Activated B cell treated with CpG ODN at 0.5 μM for 24 hours (primary cell): ENCODE measurements at regions of chr7 and their contacts with region 1.

Region 1: DNA sequence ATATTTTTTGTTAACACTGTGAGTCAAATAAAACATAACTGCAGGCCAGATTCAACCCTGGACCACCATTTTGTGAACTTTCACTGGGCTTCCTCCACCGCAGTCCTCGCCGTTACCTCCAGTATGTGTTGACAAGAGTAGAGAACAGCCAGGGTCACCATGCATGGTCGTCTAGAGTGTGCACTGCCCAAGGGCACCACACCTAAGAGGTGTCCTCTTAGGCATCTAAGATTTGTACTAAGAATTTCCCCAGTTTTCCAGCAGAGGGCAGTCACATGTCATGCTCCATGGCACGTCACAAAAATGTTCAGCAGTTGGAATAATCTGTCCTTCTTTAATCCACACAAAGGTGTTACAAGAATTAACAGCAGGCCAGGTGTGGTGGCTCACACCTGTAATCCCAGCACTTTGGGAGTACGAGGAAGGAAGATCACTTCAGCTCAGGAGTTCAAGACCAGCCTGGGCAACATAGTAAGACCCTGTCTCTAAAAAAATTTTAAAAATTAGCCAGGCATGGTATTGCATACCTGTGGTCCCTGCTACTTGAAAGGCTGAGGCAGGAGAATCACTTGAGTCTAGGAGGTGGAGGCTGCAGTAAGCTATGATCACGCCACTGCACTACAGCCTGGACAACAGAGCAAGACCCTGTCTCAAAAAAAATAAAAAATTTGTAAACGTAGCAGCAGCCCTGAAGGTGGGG is 71.2 kb upstream of the FOXK1 start:
- DNase-seq: peak; percentile 26
- ATAC-seq: peak; percentile 77
- H3K4me3 Mint-ChIP-seq: no peak overlapping the region
- H3K27ac Mint-ChIP-seq: no peak overlapping the region
- H3K4me1 Mint-ChIP-seq: peaks cover 12% of the 10 kb centered on the region
- H3K27me3 Mint-ChIP-seq: peaks cover 10% of the 10 kb centered on the region
- CTCF ChIP-seq: no peak

Region 2: GRCh38 chr7:4006687-4007086 is 604.2 kb before region 1 on chr7:
- CTCF ChIA-PET with region 1: no interaction called
- POLR2A ChIA-PET with region 1: no interaction called
- intact Hi-C with region 1: no loop called
- DNase-seq: no peak
- ATAC-seq: no peak
- H3K4me3 Mint-ChIP-seq: no peak overlapping the region
- H3K27ac Mint-ChIP-seq: no peak overlapping the region
- H3K4me1 Mint-ChIP-seq: no peaks in the 10 kb centered on the region
- H3K27me3 Mint-ChIP-seq: peaks cover 1% of the 10 kb centered on the region
- CTCF ChIP-seq: no peak

Region 3: GRCh38 chr7:4434306-4434705 is 176.6 kb before region 1 on chr7:
- CTCF ChIA-PET with region 1: no interaction called
- POLR2A ChIA-PET with region 1: no interaction called
- intact Hi-C with region 1: no loop called
- DNase-seq: no peak
- ATAC-seq: no peak
- H3K4me3 Mint-ChIP-seq: no peak overlapping the region
- H3K27ac Mint-ChIP-seq: no peak overlapping the region
- H3K4me1 Mint-ChIP-seq: no peaks in the 10 kb centered on the region
- H3K27me3 Mint-ChIP-seq: no peaks in the 10 kb centered on the region
- CTCF ChIP-seq: no peak

Region 4: DNA sequence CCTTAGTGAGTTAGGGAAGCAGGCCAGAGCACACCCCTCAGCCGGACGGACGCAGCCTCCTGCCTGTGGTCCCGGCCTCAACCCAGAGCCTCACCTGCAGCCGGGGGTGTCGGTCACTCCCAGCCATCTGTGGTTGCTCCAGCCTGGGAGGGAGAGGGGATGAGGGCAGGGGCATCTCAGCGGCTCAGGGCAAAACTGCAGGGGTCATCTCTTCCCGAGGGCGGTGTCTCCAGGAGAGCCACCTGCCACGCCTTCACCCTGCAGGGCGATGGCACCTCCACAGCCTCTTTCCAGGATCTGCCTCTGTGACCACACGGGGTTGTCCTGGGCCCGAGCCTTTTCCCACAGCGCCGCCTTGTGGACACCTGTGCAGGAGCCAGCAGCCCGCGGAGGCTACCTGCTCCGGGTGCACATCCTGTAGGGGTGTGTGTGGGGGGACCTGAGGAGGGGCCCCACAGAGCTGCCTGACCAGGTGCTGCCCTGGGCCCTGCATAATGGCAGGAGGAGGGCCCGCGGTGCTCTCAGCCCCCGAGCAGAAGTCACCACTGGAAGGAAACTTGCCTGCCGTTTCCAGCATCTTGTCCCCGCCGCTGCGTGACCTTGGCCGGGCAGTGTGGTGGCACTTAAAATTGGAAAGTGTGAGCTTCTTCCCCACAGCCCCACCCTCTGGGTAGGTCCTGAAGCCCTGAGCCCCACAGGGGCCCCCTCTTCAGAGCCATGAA is 143.0 kb after region 1 on chr7:
- CTCF ChIA-PET with region 1: interaction called, 9 read pairs
- POLR2A ChIA-PET with region 1: no interaction called
- intact Hi-C with region 1: loop called (anchors 1 kb)
- DNase-seq: peak; percentile 75
- ATAC-seq: peak; percentile 94
- H3K4me3 Mint-ChIP-seq: no peak overlapping the region
- H3K27ac Mint-ChIP-seq: no peak overlapping the region
- H3K4me1 Mint-ChIP-seq: peaks cover 10% of the 10 kb centered on the region
- H3K27me3 Mint-ChIP-seq: no peaks in the 10 kb centered on the region
- CTCF ChIP-seq: no peak

Region 5: GRCh38 chr7:4783762-4784351 is 172.9 kb after region 1 on chr7:
- CTCF ChIA-PET with region 1: no interaction called
- POLR2A ChIA-PET with region 1: no interaction called
- intact Hi-C with region 1: no loop called
- DNase-seq: no peak
- ATAC-seq: no peak
- H3K4me3 Mint-ChIP-seq: no peak overlapping the region
- H3K27ac Mint-ChIP-seq: no peak overlapping the region
- H3K4me1 Mint-ChIP-seq: no peaks in the 10 kb centered on the region
- H3K27me3 Mint-ChIP-seq: no peaks in the 10 kb centered on the region
- CTCF ChIP-seq: no peak

Region 6: GRCh38 chr7:4883374-4884144 is 272.6 kb after region 1 on chr7 and contains the start of gene RADIL:
- CTCF ChIA-PET with region 1: no interaction called
- POLR2A ChIA-PET with region 1: no interaction called
- intact Hi-C with region 1: loop called (anchors 10 kb)
- DNase-seq: peak; percentile 62
- ATAC-seq: peak; percentile 97
- H3K4me3 Mint-ChIP-seq: peak within 1 kb of the TSS; percentile 46
- H3K27ac Mint-ChIP-seq: no peak within 1 kb of the TSS
- H3K4me1 Mint-ChIP-seq: peaks cover 12% of the 10 kb centered on the region
- H3K27me3 Mint-ChIP-seq: peaks cover 45% of the 10 kb centered on the region
- CTCF ChIP-seq: no peak
- total RNA-seq, gene RADIL: not detected in 2 replicates